Naive thymus-derived CD8-positive, alpha-beta T cell (primary cell): ENCODE measurements at regions of chr19 and their contacts with region 1.

Region 1: GRCh38 chr19:4831304-4831978 is at the start of gene TICAM1:
- DNase-seq: peak; percentile 48 to 83 (median 72)
- ATAC-seq: peak; percentile 93 to 95
- H3K4me3 Mint-ChIP-seq: peak within 1 kb of the TSS; percentile 84 to 96 (median 91)
- H3K27ac Mint-ChIP-seq: peak within 1 kb of the TSS; percentile 80 to 98 (median 93)
- H3K4me1 Mint-ChIP-seq: peaks cover 16 to 35% (median 28%) of the 10 kb centered on the region in 4 donors
- H3K27me3 Mint-ChIP-seq: no peaks in the 10 kb centered on the region
- polyA plus RNA-seq, gene TICAM1: 2.4 to 8.5 (median 3.3) TPM

Region 2: DNA sequence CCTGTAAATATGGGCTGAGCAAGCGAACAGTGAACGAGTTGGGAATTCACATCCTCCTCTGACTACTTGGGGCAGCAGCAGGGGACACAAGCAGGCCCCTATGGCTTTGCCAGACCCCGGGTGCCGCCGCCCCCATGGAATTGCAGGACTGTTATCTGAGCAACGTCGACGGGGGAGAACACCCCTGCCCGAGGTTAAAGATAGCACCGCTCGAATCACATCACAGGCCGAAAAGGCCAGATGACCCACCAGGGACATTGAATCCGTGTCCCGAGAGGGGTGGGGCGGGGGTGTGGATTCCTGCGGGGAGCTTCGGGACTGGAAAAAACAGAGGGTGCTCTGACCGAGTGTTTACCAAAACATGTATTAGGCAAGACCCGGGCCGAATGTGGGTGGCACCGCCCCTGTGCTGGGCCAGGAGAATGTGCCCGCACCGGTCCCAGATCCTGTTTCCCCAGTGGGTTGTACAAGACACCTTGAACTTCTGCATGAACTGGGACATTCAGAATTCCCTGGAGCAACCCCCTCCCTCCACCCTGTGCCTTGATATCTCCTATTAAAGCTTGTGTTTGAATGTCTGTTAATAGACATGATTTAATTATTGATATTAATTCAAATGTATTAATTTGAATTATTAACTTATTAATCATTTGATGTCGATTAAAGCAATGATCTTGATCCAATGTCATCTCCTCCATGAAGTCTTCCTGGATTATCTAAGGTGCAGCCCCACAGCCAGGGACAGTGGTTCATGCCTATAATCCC is 30.7 kb before region 1 on chr19:
- POLR2A ChIA-PET with region 1: no interaction called
- DNase-seq: no peak
- ATAC-seq: no peak
- H3K4me3 Mint-ChIP-seq: no peak overlapping the region
- H3K27ac Mint-ChIP-seq: no peak overlapping the region
- H3K4me1 Mint-ChIP-seq: peaks cover 6 to 21% (median 10%) of the 10 kb centered on the region in 4 donors
- H3K27me3 Mint-ChIP-seq: no peaks in the 10 kb centered on the region

Region 3: GRCh38 chr19:4811328-4812131 is 19.9 kb before region 1 on chr19:
- POLR2A ChIA-PET with region 1: interaction called, 15 read pairs
- DNase-seq: peak; percentile 71 to 93 (median 84)
- ATAC-seq: peak; percentile 74 to 75
- H3K4me3 Mint-ChIP-seq: no peak overlapping the region
- H3K27ac Mint-ChIP-seq: peak overlapping the region in 3 of 10 donors; percentile 50 to 66 (median 57)
- H3K4me1 Mint-ChIP-seq: peaks cover 13 to 36% (median 22%) of the 10 kb centered on the region in 4 donors
- H3K27me3 Mint-ChIP-seq: no peaks in the 10 kb centered on the region